ENCODE measurements at regions of chr2 and their contacts with region 1.

Region 1: GRCh38 chr2:213015387-213016165 is 135.8 kb downstream of the IKZF2 start:
- DNase-seq: peak; percentile 98
- ATAC-seq: peak; percentile 55
- H3K4me3 ChIP-seq: peak overlapping the region; percentile 65
- H3K27ac ChIP-seq: peak overlapping the region; percentile 96
- H3K4me1 ChIP-seq: peaks cover 20% of the 10 kb centered on the region
- H3K27me3 ChIP-seq: no peaks in the 10 kb centered on the region
- CTCF ChIP-seq: no peak
- EP300 ChIP-seq: peak; percentile 92 to 93
- POLR2A ChIP-seq: no peak
- RAD21 ChIP-seq: no peak

Region 2: DNA sequence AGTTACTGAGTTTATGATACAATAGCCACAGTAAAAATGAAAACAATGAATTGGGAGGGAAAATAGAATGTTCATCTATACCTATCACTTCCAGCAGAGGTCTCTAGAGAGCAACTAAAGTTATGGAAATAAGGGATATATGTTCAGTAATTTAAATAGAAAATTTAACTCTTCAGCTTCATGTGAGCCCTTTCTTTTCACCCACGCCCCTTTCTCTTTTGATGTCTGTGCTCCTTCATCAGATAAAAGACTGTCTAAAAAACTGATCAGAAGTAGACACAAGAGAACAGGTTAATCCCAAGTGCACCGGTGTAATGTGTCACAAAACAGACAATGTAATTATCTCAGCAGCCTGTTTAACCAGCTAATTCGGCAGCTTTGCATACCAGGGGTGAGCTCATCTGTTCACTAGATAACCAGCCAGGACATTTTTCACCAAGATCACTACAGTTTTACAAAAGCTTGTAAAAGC is 238.5 kb before region 1 on chr2:
- CTCF ChIA-PET with region 1: interaction called, 12 read pairs
- POLR2A ChIA-PET with region 1: no interaction called
- RAD21 ChIA-PET with region 1: interaction called, 3 read pairs
- SMC1A ChIA-PET with region 1: interaction called, 11 read pairs
- in situ Hi-C with region 1: no loop called
- intact Hi-C with region 1: loop called (anchors 5 kb)
- DNase-seq: peak; percentile 17
- ATAC-seq: peak; percentile 74
- H3K4me3 ChIP-seq: no peak overlapping the region
- H3K27ac ChIP-seq: no peak overlapping the region
- H3K4me1 ChIP-seq: no peaks in the 10 kb centered on the region
- H3K27me3 ChIP-seq: no peaks in the 10 kb centered on the region
- CTCF ChIP-seq: peak; percentile 47 to 63 (median 53)
- EP300 ChIP-seq: no peak
- POLR2A ChIP-seq: no peak
- RAD21 ChIP-seq: peak; percentile 69

Region 3: DNA sequence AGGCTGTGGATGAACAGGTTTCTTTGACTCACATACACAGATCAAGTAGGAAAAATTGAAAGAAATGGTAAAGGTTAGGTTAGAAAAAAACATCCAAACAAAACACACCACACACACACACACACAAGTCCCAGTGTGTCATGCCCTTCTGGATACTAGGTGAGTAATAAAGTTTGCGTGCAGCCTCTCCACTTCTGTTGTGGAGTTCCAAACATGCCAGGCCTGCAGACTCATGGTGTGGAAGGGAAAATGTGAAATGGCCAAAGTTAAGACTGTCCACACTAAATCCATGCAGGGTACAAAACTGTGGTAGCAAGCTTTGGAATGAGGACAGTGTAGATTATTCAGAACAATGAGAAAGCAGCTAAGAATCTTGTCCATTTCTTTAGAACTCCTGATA is 21.3 kb after region 1 on chr2:
- CTCF ChIA-PET with region 1: interaction called, 3 read pairs
- POLR2A ChIA-PET with region 1: interaction called, 6 read pairs
- RAD21 ChIA-PET with region 1: interaction called, 31 read pairs
- SMC1A ChIA-PET with region 1: interaction called, 69 read pairs
- in situ Hi-C with region 1: no loop called
- intact Hi-C with region 1: no loop called
- DNase-seq: no peak
- ATAC-seq: peak; percentile 2; the same call in 1 of the 3 replicates
- H3K4me3 ChIP-seq: no peak overlapping the region
- H3K27ac ChIP-seq: peak overlapping the region; percentile 17; the same call in 1 of the 2 replicates
- H3K4me1 ChIP-seq: peaks cover 26% of the 10 kb centered on the region
- H3K27me3 ChIP-seq: no peaks in the 10 kb centered on the region
- CTCF ChIP-seq: no peak
- EP300 ChIP-seq: no peak
- POLR2A ChIP-seq: no peak
- RAD21 ChIP-seq: no peak

Region 4: DNA sequence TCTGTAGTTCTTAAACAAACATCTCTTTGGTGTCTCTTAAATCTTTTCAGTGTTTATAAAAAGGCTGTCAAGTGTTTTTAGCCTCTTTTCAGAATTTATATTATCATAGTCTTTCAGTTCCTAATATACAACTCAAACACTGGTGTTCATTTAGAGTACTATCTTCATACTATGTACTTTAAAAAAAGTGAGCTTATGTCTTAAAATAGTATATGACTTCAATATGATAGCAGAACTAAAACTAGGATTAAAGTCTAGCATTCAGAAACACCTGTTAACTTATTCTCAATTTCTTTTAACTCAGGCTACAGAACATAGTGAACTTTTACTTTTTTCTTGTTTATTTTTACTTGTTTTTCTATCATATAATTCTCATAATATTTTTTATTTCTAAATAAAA is 150.5 kb after region 1 on chr2:
- CTCF ChIA-PET with region 1: interaction called, 3 read pairs
- POLR2A ChIA-PET with region 1: interaction called, 3 read pairs
- RAD21 ChIA-PET with region 1: interaction called, 17 read pairs
- SMC1A ChIA-PET with region 1: interaction called, 4 read pairs
- in situ Hi-C with region 1: no loop called
- intact Hi-C with region 1: no loop called
- DNase-seq: no peak
- ATAC-seq: peak; percentile 93
- H3K4me3 ChIP-seq: no peak overlapping the region
- H3K27ac ChIP-seq: peak overlapping the region; percentile 76
- H3K4me1 ChIP-seq: peaks cover 35% of the 10 kb centered on the region
- H3K27me3 ChIP-seq: no peaks in the 10 kb centered on the region
- CTCF ChIP-seq: no peak
- EP300 ChIP-seq: peak in 1 of 2 experiments; percentile 19; a peak in 2 of 4 replicates
- POLR2A ChIP-seq: no peak
- RAD21 ChIP-seq: no peak

Region 5: GRCh38 chr2:213238753-213239495 is 223.3 kb after region 1 on chr2:
- CTCF ChIA-PET with region 1: interaction called, 8 read pairs
- POLR2A ChIA-PET with region 1: interaction called, 30 read pairs
- RAD21 ChIA-PET with region 1: interaction called, 72 read pairs
- SMC1A ChIA-PET with region 1: interaction called, 237 read pairs
- in situ Hi-C with region 1: no loop called
- intact Hi-C with region 1: no loop called
- DNase-seq: no peak
- ATAC-seq: peak; percentile 35
- H3K4me3 ChIP-seq: peak overlapping the region; percentile 58
- H3K27ac ChIP-seq: peak overlapping the region; percentile 98
- H3K4me1 ChIP-seq: peaks cover 47% of the 10 kb centered on the region
- H3K27me3 ChIP-seq: no peaks in the 10 kb centered on the region
- CTCF ChIP-seq: no peak
- EP300 ChIP-seq: peak; percentile 8 to 53; a peak in 1 of 4 replicates
- POLR2A ChIP-seq: no peak
- RAD21 ChIP-seq: no peak

Region 6: DNA sequence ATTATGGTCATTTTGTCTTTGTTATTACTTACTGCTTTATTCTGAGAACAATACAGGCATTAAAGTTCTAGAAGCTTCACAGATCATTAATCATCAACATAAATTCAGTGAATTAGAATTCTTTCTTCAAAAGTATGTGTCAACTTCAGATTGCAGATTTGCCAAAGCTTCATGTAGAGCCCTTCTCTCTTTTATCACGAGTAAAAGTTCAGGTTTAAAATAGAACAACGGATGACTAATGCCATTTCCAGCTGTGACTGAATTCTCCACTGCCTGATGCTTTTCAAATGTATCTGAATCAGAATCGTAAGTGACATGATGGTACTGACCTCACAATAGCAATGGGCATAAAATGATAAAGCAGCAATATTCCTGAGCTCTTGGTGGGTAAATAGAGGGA is 2006.8 kb after region 1 on chr2:
- CTCF ChIA-PET with region 1: no interaction called
- POLR2A ChIA-PET with region 1: no interaction called
- RAD21 ChIA-PET with region 1: no interaction called
- SMC1A ChIA-PET with region 1: no interaction called
- in situ Hi-C with region 1: no loop called
- intact Hi-C with region 1: loop called (anchors 10 kb)
- DNase-seq: no peak
- ATAC-seq: no peak
- H3K4me3 ChIP-seq: no peak overlapping the region
- H3K27ac ChIP-seq: no peak overlapping the region
- H3K4me1 ChIP-seq: peaks cover 11% of the 10 kb centered on the region
- H3K27me3 ChIP-seq: no peaks in the 10 kb centered on the region
- CTCF ChIP-seq: no peak
- EP300 ChIP-seq: no peak
- POLR2A ChIP-seq: no peak
- RAD21 ChIP-seq: no peak

Measured in GM12878 (cell line).